Motor neuron (in vitro differentiated cells): ENCODE measurements at regions of chr1 and their contacts with region 1.

Region 1: GRCh38 chr1:201214461-201214860 is 23.8 kb downstream of the IGFN1 start:
- ATAC-seq: peak in 1 of 8 experiments; percentile 13
- H3K4me3 ChIP-seq: no peak overlapping the region
- H3K27ac ChIP-seq: no peak overlapping the region
- H3K4me1 ChIP-seq: no peaks in the 10 kb centered on the region

Region 2: DNA sequence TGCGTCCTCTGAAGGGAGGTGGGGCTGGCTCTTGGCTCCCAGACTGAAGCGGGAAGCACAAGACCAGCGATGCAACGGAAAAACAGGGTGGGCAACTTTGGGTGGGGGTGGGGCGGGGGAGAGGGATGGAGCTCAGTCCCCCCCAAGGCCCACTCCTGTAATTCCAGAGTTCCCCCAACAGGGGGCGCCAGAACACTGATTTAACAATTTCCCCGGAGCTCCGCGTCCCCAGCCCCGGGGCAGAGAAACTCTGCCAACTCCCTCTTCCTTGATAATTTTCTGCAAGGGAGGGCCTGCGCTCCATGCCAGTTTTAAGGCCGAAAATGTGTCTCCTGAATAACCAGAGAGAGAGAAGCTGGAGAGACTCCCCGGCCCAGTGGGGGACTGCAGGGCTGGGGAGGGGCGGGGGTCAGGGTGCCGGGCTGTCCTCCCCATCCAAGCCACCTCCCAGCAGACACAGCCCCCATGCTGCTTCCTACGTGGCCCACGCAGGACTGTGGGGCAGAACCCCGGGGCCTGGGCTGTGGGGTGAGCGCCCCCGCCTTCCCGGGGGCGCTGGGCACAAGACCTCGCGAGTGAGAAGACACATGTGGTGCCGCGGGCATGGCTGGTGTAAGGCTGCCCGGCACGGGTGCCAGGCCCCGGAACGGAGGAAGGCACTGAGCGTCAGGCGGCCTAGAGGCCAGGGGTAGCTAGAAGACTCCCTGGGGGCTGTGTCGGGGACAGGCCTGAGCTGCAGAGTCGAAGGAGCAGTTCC is 242.3 kb before region 1 on chr1:
- in situ Hi-C with region 1: loop called in 1 of 9 experiments (anchors 25 kb)
- ATAC-seq: peak; percentile 51 to 83 (median 62)
- H3K4me3 ChIP-seq: no peak overlapping the region
- H3K27ac ChIP-seq: no peak overlapping the region
- H3K4me1 ChIP-seq: peaks cover 0 to 2% of the 10 kb centered on the region in 2 donors

Region 3: GRCh38 chr1:201506556-201507359 is 292.3 kb after region 1 on chr1 and contains the start of gene CSRP1:
- in situ Hi-C with region 1: no loop called
- ATAC-seq: peak; percentile 73 to 89 (median 82)
- H3K4me3 ChIP-seq: peak within 1 kb of the TSS; percentile 16 to 57 (median 36)
- H3K27ac ChIP-seq: no peak within 1 kb of the TSS
- H3K4me1 ChIP-seq: peaks cover 32 to 43% of the 10 kb centered on the region in 2 donors
- total RNA-seq, gene CSRP1: 9.0 to 109 (median 54.9) TPM